Calu3 (cell line): ENCODE measurements at regions of chr17 and their contacts with region 1.

Region 1: GRCh38 chr17:56319517-56319916 is 166.2 kb downstream of the ANKFN1 start:
- DNase-seq: no peak
- H3K4me3 Mint-ChIP-seq: no peak overlapping the region
- H3K27ac Mint-ChIP-seq: no peak overlapping the region
- H3K4me1 Mint-ChIP-seq: no peaks in the 10 kb centered on the region
- H3K27me3 Mint-ChIP-seq: peaks cover 29% of the 10 kb centered on the region
- CTCF ChIP-seq: peak; percentile 26

Region 2: DNA sequence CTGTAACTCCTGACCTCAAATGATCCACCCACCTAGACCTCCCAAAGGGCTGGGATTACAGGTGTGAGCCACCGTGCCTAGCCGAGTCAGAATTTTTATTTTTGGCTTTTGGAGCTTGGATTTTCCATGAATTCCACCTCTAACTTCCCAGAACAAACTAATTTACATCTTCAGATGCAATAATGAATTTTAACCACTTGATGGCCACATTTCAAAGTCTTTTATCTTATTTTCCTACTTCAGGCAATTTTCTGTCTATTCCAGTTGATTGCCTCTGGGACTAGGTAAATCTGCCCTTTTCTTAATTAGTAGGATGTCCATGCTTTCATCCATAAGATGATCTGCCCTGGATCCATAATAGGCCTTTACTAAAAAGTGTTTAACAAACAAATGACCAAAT is 322.7 kb before region 1 on chr17:
- CTCF ChIA-PET with region 1: no interaction called
- intact Hi-C with region 1: loop called (anchors 1 kb)
- DNase-seq: no peak
- H3K4me3 Mint-ChIP-seq: no peak overlapping the region
- H3K27ac Mint-ChIP-seq: no peak overlapping the region
- H3K4me1 Mint-ChIP-seq: no peaks in the 10 kb centered on the region
- H3K27me3 Mint-ChIP-seq: no peaks in the 10 kb centered on the region
- CTCF ChIP-seq: no peak

Region 3: GRCh38 chr17:56125830-56126819 is 193.4 kb before region 1 on chr17:
- CTCF ChIA-PET with region 1: interaction called, 3 read pairs
- intact Hi-C with region 1: loop called (anchors 1 kb)
- DNase-seq: peak; percentile 34
- H3K4me3 Mint-ChIP-seq: no peak overlapping the region
- H3K27ac Mint-ChIP-seq: no peak overlapping the region
- H3K4me1 Mint-ChIP-seq: no peaks in the 10 kb centered on the region
- H3K27me3 Mint-ChIP-seq: no peaks in the 10 kb centered on the region
- CTCF ChIP-seq: peak; percentile 26

Region 4: DNA sequence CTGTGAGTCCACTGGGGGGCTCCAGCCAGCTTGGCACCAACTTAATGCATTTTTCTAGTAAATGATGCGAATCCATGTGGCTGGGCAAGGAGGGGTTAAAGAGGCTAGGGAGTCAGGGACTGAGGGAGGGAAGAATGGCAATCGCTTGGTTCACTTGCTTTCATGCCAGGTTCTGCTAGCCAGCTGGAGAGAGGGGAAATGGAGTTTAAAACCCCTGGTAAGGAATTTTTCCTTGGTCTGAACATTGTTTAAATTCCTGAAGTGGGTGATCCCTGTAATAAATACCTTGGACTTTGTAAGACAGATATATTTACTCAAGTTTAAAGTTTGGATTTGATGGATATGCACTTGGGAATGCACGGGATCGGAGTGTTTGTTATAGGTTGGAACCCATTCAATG is 143.4 kb before region 1 on chr17:
- CTCF ChIA-PET with region 1: no interaction called
- intact Hi-C with region 1: no loop called
- DNase-seq: no peak
- H3K4me3 Mint-ChIP-seq: no peak overlapping the region
- H3K27ac Mint-ChIP-seq: no peak overlapping the region
- H3K4me1 Mint-ChIP-seq: no peaks in the 10 kb centered on the region
- H3K27me3 Mint-ChIP-seq: no peaks in the 10 kb centered on the region
- CTCF ChIP-seq: no peak

Region 5: GRCh38 chr17:56297184-56297583 is 22.3 kb before region 1 on chr17:
- CTCF ChIA-PET with region 1: no interaction called
- intact Hi-C with region 1: no loop called
- DNase-seq: no peak
- H3K4me3 Mint-ChIP-seq: no peak overlapping the region
- H3K27ac Mint-ChIP-seq: no peak overlapping the region
- H3K4me1 Mint-ChIP-seq: no peaks in the 10 kb centered on the region
- H3K27me3 Mint-ChIP-seq: peaks cover 46% of the 10 kb centered on the region
- CTCF ChIP-seq: no peak

Region 6: DNA sequence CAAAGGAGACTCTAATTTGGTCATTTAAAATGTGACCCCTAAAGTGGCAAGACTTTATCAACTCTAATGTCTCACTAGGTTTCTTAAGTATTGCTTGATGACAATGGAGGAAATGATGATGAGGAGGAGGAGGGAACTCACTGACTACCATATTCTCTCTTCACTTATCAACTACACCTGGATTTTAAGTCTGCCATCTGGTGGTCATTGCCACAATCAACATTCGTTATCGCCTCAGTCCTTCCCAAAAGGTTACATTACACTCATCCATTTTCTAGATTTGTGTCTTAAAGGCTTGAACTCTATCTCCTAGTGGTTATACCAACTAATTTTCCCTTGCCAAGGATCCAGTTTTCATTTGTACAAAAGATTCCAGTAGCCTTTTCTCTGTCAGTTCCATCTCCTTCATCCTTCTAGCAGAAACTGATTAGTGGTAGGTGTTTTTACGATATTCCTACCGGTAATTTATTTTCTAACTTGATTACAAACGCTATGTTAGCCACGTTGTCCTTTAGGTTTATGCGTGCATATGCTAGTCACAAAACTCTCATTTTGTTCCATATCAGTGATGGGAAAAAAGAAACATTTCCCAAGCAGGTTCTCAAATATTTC is 159.4 kb after region 1 on chr17:
- CTCF ChIA-PET with region 1: no interaction called
- intact Hi-C with region 1: loop called (anchors 10 kb)
- DNase-seq: no peak
- H3K4me3 Mint-ChIP-seq: no peak overlapping the region
- H3K27ac Mint-ChIP-seq: no peak overlapping the region
- H3K4me1 Mint-ChIP-seq: no peaks in the 10 kb centered on the region
- H3K27me3 Mint-ChIP-seq: peaks cover 23% of the 10 kb centered on the region
- CTCF ChIP-seq: no peak